Mammary epithelial cell (primary cell): ENCODE measurements at regions of chr2 and their contacts with region 1.

Region 1: GRCh38 chr2:121974897-121975661 is 219.6 kb downstream of the TSN start:
- DNase-seq: peak; percentile 63
- H3K4me3 ChIP-seq: peak overlapping the region in 2 of 3 experiments; percentile 15 to 29
- H3K27ac ChIP-seq: no peak overlapping the region
- H3K4me1 ChIP-seq: peaks cover 4% of the 10 kb centered on the region
- H3K27me3 ChIP-seq: no peaks in the 10 kb centered on the region
- CTCF ChIP-seq: peak; percentile 22 to 55

Region 2: DNA sequence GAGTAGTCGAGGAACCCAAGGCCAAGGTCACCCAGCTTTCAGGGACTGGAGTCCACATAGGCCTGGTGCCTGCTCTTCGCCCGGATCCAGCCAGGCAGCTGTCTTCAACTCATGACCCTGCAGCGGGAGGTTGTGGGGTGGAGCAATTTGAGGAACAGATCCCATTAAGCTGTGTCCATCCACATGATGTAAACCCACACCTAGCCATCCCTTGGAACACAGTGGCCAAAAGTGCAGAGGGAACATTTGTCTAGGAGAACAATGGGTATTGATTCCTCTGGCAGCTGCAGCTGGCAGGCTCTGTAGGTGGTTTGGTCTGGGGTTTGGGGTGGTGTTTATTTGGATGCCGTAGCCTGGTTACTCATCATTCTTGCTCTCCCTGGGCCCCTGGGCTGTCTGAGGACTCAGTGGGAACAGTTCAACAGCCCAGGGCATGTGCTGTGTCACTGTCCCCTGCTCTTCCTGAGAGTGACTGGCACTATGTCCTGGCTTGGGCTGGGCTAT is 789.5 kb before region 1 on chr2:
- CTCF ChIA-PET with region 1: no interaction called
- dilution Hi-C with region 1: no loop called
- in situ Hi-C with region 1: no loop called
- intact Hi-C with region 1: no loop called
- DNase-seq: peak; percentile 96
- H3K4me3 ChIP-seq: no peak overlapping the region
- H3K27ac ChIP-seq: peak overlapping the region; percentile 89
- H3K4me1 ChIP-seq: peaks cover 38% of the 10 kb centered on the region
- H3K27me3 ChIP-seq: no peaks in the 10 kb centered on the region
- CTCF ChIP-seq: no peak

Region 3: GRCh38 chr2:121810959-121811853 is 163.9 kb before region 1 on chr2:
- CTCF ChIA-PET with region 1: no interaction called
- dilution Hi-C with region 1: no loop called
- in situ Hi-C with region 1: loop called in 1 of 2 experiments (anchors 25 kb)
- intact Hi-C with region 1: loop called (anchors 1 kb)
- DNase-seq: peak; percentile 48
- H3K4me3 ChIP-seq: no peak overlapping the region
- H3K27ac ChIP-seq: no peak overlapping the region
- H3K4me1 ChIP-seq: no peaks in the 10 kb centered on the region
- H3K27me3 ChIP-seq: no peaks in the 10 kb centered on the region
- CTCF ChIP-seq: peak; percentile 57 to 69

Region 4: GRCh38 chr2:122072666-122073065 is 97.6 kb after region 1 on chr2:
- CTCF ChIA-PET with region 1: no interaction called
- dilution Hi-C with region 1: no loop called
- in situ Hi-C with region 1: no loop called
- intact Hi-C with region 1: no loop called
- DNase-seq: no peak
- H3K4me3 ChIP-seq: no peak overlapping the region
- H3K27ac ChIP-seq: no peak overlapping the region
- H3K4me1 ChIP-seq: peaks cover 13% of the 10 kb centered on the region
- H3K27me3 ChIP-seq: no peaks in the 10 kb centered on the region
- CTCF ChIP-seq: no peak

Region 5: DNA sequence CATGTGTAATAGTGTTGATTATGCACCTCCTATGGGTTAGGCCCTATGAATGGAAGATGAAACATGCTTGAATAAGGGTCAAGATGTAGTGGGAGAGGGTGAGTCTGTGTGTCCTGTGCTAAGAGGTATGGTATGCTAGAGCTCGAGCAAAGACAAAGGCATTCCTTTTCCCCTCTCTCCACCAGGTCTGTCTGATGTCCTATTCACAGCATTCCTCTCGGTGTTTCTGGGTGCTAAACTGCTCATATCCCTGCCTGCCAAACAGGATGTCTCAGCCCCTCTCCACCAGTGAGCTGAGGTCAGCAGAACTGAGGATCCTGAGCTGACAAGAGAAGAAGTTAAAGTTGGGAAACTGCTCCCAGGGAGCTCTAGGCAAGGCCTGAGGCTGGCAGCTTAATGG is 125.3 kb after region 1 on chr2:
- CTCF ChIA-PET with region 1: no interaction called
- dilution Hi-C with region 1: no loop called
- in situ Hi-C with region 1: loop called in 1 of 2 experiments (anchors 25 kb)
- intact Hi-C with region 1: no loop called
- DNase-seq: peak; percentile 41
- H3K4me3 ChIP-seq: no peak overlapping the region
- H3K27ac ChIP-seq: no peak overlapping the region
- H3K4me1 ChIP-seq: no peaks in the 10 kb centered on the region
- H3K27me3 ChIP-seq: no peaks in the 10 kb centered on the region
- CTCF ChIP-seq: no peak

Region 6: DNA sequence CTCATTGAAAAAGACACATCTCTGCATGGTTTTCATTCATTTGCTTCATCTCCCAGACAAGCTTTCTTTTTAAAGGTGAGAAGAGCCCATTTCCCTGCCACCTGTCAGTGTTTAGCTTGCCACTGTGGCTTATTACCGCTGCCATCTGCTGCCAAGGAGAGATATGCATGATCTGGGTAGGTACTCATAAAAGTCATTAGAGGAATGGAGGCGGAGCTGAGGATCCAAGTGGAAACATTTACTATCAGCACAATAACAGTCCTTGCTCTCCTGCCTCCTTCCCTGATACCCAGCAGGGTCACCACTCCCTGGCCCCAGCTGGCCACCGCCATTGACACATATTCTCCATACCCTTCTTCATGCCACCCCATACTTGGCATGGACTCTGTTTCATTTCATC is 170.8 kb after region 1 on chr2:
- CTCF ChIA-PET with region 1: no interaction called
- dilution Hi-C with region 1: no loop called
- in situ Hi-C with region 1: no loop called
- intact Hi-C with region 1: loop called (anchors 2 kb)
- DNase-seq: no peak
- H3K4me3 ChIP-seq: no peak overlapping the region
- H3K27ac ChIP-seq: no peak overlapping the region
- H3K4me1 ChIP-seq: no peaks in the 10 kb centered on the region
- H3K27me3 ChIP-seq: no peaks in the 10 kb centered on the region
- CTCF ChIP-seq: no peak

Region 7: GRCh38 chr2:122218596-122218995 is 243.5 kb after region 1 on chr2:
- CTCF ChIA-PET with region 1: no interaction called
- dilution Hi-C with region 1: no loop called
- in situ Hi-C with region 1: no loop called
- intact Hi-C with region 1: no loop called
- DNase-seq: no peak
- H3K4me3 ChIP-seq: no peak overlapping the region
- H3K27ac ChIP-seq: no peak overlapping the region
- H3K4me1 ChIP-seq: no peaks in the 10 kb centered on the region
- H3K27me3 ChIP-seq: no peaks in the 10 kb centered on the region
- CTCF ChIP-seq: no peak

Region 8: GRCh38 chr2:122300758-122301157 is 325.7 kb after region 1 on chr2:
- CTCF ChIA-PET with region 1: no interaction called
- dilution Hi-C with region 1: no loop called
- in situ Hi-C with region 1: no loop called
- intact Hi-C with region 1: loop called (anchors 5 kb)
- DNase-seq: peak; percentile 6
- H3K4me3 ChIP-seq: no peak overlapping the region
- H3K27ac ChIP-seq: no peak overlapping the region
- H3K4me1 ChIP-seq: no peaks in the 10 kb centered on the region
- H3K27me3 ChIP-seq: no peaks in the 10 kb centered on the region
- CTCF ChIP-seq: peak in 1 of 2 donors; percentile 22

Region 9: GRCh38 chr2:122451040-122451439 is 476.0 kb after region 1 on chr2:
- CTCF ChIA-PET with region 1: no interaction called
- dilution Hi-C with region 1: no loop called
- in situ Hi-C with region 1: loop called (anchors 10 kb)
- intact Hi-C with region 1: loop called (anchors 1 kb)
- DNase-seq: peak; percentile 42
- H3K4me3 ChIP-seq: no peak overlapping the region
- H3K27ac ChIP-seq: no peak overlapping the region
- H3K4me1 ChIP-seq: no peaks in the 10 kb centered on the region
- H3K27me3 ChIP-seq: no peaks in the 10 kb centered on the region
- CTCF ChIP-seq: peak; percentile 57 to 78